ENCODE measurements at regions of chr3 and their contacts with region 1.

Region 1: GRCh38 chr3:42769477-42770131 is 3.4 kb downstream of the CCDC13 start:
- DNase-seq: no peak
- H3K4me3 ChIP-seq: no peak overlapping the region
- H3K27ac ChIP-seq: no peak overlapping the region
- H3K4me1 ChIP-seq: peaks cover 2 to 12% (median 9%) of the 10 kb centered on the region in 4 experiments
- H3K27me3 ChIP-seq: no peaks in the 10 kb centered on the region

Region 2: GRCh38 chr3:42421818-42422796 is 347.5 kb before region 1 on chr3:
- CTCF ChIA-PET with region 1: no interaction called
- POLR2A ChIA-PET with region 1: no interaction called
- DNase-seq: no peak
- H3K4me3 ChIP-seq: no peak overlapping the region
- H3K27ac ChIP-seq: no peak overlapping the region
- H3K4me1 ChIP-seq: no peaks in the 10 kb centered on the region
- H3K27me3 ChIP-seq: no peaks in the 10 kb centered on the region

Region 3: DNA sequence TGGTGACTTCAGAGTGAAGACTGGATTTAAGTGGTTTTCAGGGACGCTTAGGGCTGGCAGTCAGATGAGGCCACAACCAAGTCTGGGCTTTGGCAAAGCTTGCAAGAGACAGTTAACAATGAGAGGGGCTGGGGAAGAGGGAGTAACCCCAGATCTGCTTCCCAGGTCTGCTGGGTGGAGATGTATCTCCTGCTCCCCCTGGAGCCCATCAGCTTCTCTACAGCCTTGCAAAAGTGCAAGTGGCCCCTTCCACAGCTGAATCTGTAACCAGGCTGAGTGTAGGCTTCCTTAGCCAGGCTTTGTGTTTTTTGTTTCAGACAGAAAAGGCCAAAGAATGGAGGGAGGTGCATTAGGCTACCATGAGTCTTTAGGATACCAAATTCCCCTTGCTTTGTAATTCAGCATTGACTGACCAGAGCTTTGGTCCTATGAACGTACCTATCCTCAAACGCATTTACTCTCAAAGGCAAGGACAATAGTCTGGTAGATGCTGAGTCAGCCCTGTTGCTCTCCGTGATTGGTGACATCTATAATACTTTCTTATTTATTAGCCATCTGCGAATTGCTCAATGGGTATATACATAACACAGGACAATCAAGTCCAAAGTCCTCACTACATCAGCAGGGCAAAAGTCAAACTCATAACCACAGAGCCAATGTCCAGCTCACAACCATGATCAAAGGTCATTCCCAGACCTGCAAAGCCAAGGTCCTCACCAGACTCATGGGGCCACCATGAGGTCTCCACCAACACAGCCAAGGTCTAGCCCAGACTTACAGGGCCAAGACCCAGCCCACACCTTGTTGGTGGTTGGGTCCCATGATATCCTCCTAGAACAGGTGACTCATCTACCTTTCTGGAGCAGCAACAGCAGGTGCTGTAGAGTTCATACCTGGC is 13.7 kb before region 1 on chr3:
- CTCF ChIA-PET with region 1: interaction called, 11 read pairs
- POLR2A ChIA-PET with region 1: no interaction called
- DNase-seq: peak; percentile 27 to 52 (median 48)
- H3K4me3 ChIP-seq: no peak overlapping the region
- H3K27ac ChIP-seq: no peak overlapping the region
- H3K4me1 ChIP-seq: peaks cover 0 to under 1% (median 0%) of the 10 kb centered on the region in 4 experiments
- H3K27me3 ChIP-seq: peaks cover 0 to 2% (median 0%) of the 10 kb centered on the region in 5 experiments

Region 4: GRCh38 chr3:42786212-42786611 is 16.6 kb after region 1 on chr3:
- CTCF ChIA-PET with region 1: no interaction called
- POLR2A ChIA-PET with region 1: no interaction called
- DNase-seq: no peak
- H3K4me3 ChIP-seq: no peak overlapping the region
- H3K27ac ChIP-seq: no peak overlapping the region
- H3K4me1 ChIP-seq: no peaks in the 10 kb centered on the region
- H3K27me3 ChIP-seq: no peaks in the 10 kb centered on the region